Panc1 (cell line): ENCODE measurements at regions of chr20 and their contacts with region 1.

Region 1: DNA sequence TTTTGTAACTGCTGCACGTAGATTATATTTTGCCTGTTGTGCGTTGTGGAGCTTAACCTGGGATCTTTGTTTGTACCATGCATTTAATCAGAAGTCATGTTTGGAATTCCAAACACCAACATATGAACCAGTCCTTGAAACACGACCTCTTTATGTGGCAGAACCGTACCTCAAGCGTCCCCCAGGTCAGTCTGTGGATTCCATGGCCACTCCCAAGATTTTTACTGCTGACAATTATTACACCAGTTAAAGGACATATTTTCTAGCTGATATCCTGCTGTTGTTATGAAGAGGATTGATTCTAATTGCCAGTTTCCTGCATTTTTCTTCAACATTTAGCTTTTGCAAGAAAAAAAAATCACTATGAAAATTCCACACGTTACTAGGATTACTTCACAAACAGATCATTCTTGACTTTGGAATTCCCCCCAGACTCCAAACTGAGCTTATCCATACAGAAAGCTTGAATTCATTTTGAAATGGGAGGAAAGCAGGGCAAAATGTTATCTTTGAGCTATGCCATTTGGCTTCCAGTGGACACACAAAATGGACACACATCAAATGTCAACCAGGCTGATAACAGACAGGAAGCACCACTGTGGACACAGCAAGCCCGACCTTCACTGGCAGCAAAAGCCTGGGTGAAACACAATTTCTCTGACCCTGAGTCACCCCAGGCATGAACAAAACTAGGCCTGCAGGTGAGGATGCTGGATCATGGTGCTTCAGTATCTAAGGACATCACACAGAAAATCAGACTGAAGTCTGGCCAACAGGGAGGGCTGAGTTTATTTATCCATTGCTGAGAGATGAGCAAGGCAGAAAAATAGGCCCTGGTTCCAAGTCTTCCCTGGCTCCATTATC is 542.9 kb upstream of the JAG1 start:
- DNase-seq: no peak
- ATAC-seq: peak; percentile 62
- H3K4me3 ChIP-seq: no peak overlapping the region
- H3K27ac ChIP-seq: no peak overlapping the region
- H3K4me1 ChIP-seq: peaks cover 11% of the 10 kb centered on the region
- H3K27me3 ChIP-seq: no peaks in the 10 kb centered on the region
- CTCF ChIP-seq: no peak

Region 2: GRCh38 chr20:10553326-10553984 is 663.2 kb before region 1 on chr20:
- CTCF ChIA-PET with region 1: interaction called, 7 read pairs
- POLR2A ChIA-PET with region 1: no interaction called
- in situ Hi-C with region 1: no loop called
- intact Hi-C with region 1: loop called (anchors 10 kb)
- DNase-seq: no peak
- ATAC-seq: peak; percentile 81
- H3K4me3 ChIP-seq: no peak overlapping the region
- H3K27ac ChIP-seq: peak overlapping the region; percentile 8; the same call in 1 of the 2 replicates
- H3K4me1 ChIP-seq: peaks cover 18% of the 10 kb centered on the region
- H3K27me3 ChIP-seq: no peaks in the 10 kb centered on the region
- CTCF ChIP-seq: peak; percentile 80; the same call in 1 of the 2 replicates